Caco-2 (cell line): ENCODE measurements at regions of chr21 and their contacts with region 1.

Region 1: DNA sequence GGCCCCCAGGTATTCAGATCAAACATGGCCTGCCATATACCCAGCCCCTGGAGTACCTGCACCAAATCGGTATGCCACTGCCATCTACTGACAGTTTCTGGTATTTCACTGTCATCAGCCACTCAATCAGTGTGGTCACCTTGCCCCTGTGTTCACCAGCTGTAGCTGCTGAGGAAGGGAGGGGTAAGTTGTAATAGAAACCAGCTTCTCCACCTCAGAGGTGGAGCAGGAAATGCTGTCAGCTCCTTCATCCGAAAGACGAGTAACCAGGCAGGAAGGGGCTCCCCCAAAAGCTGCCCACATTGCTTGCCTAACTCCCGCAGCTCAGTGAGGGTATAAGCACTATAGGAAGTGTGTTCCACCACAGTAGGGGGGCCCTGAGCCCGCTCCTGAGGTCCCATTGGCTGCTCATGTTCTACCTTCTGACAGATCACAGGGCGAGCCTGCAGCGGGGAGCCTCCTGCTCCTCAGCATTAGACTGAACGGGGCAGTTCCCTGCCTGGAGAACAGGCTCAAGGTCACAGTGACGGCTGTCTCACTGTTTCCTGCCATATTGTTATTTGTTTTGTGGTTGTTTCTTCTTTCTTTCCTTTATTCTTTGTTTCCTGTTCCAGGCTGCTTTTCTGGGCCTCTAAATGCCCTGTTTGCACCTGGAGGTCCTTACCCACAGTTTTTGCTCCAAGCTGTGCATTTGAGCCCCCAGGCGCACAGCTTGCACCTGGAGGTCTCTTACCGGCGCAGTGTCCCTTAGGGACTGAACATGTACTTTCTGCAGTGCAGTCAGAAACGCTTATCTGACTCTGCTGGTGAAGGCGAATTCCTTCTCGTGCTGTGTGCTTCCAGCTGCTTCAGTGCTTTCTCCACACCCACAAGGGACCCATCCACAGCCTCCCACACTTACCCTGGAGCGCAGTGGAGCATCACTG is 1638.3 kb downstream of the MRPL39 start:
- DNase-seq: peak; percentile 59 to 63
- H3K4me3 ChIP-seq: no peak overlapping the region
- H3K4me3 Mint-ChIP-seq: no peak overlapping the region
- H3K27ac Mint-ChIP-seq: no peak overlapping the region
- H3K4me1 ChIP-seq: no peaks in the 10 kb centered on the region
- H3K4me1 Mint-ChIP-seq: no peaks in the 10 kb centered on the region
- H3K27me3 ChIP-seq: no peaks in the 10 kb centered on the region
- H3K27me3 Mint-ChIP-seq: no peaks in the 10 kb centered on the region
- CTCF ChIP-seq: peak; percentile 33 to 57

Region 2: GRCh38 chr21:23837564-23837963 is 131.4 kb before region 1 on chr21:
- CTCF ChIA-PET with region 1: no interaction called
- POLR2A ChIA-PET with region 1: no interaction called
- intact Hi-C with region 1: no loop called
- DNase-seq: no peak
- H3K4me3 ChIP-seq: no peak overlapping the region
- H3K4me3 Mint-ChIP-seq: no peak overlapping the region
- H3K27ac Mint-ChIP-seq: no peak overlapping the region
- H3K4me1 ChIP-seq: no peaks in the 10 kb centered on the region
- H3K4me1 Mint-ChIP-seq: no peaks in the 10 kb centered on the region
- H3K27me3 ChIP-seq: no peaks in the 10 kb centered on the region
- H3K27me3 Mint-ChIP-seq: no peaks in the 10 kb centered on the region
- CTCF ChIP-seq: no peak

Region 3: DNA sequence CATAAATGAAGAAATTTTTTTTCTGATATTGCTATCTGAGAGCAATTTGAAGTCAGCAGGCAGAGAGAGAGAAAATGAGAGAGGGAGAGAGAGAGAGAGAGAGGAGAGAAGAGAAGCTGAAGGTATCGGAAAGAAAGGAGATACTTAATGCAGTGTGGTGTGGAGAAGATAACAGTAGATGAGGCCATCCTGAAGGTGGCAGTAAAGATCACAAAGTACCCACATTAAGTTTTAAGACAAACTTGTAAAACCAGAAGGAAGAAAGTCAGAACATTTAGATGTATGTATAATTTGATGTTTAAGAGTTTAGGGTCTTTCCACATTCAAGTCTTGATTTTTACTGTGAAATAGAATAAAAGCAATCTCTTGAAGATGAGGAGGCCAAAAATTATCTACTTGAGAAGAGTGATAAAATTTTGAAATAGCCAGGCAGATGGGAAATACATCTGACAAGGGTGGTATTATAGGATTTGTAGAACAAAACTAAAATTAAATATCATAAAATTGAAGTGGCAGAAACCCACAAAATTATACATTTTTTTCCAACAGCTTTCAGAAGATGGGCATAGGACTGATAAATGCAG is 115.1 kb before region 1 on chr21:
- CTCF ChIA-PET with region 1: no interaction called
- POLR2A ChIA-PET with region 1: no interaction called
- intact Hi-C with region 1: loop called (anchors 1 kb)
- DNase-seq: peak in 1 of 2 experiments; percentile 2
- H3K4me3 ChIP-seq: no peak overlapping the region
- H3K4me3 Mint-ChIP-seq: no peak overlapping the region
- H3K27ac Mint-ChIP-seq: no peak overlapping the region
- H3K4me1 ChIP-seq: no peaks in the 10 kb centered on the region
- H3K4me1 Mint-ChIP-seq: no peaks in the 10 kb centered on the region
- H3K27me3 ChIP-seq: no peaks in the 10 kb centered on the region
- H3K27me3 Mint-ChIP-seq: no peaks in the 10 kb centered on the region
- CTCF ChIP-seq: peak in 1 of 2 experiments; percentile 32